ENCODE measurements at regions of chr19 and their contacts with region 1.

Region 1: GRCh38 chr19:37466798-37467607 is at the start of gene ZNF569:
- DNase-seq: peak; percentile 95
- ATAC-seq: peak; percentile 69
- H3K4me3 ChIP-seq: peak within 1 kb of the TSS; percentile 80 to 98 (median 86)
- H3K4me3 Mint-ChIP-seq: peak within 1 kb of the TSS; percentile 99
- H3K27ac ChIP-seq: peak within 1 kb of the TSS; percentile 77
- H3K27ac Mint-ChIP-seq: peak within 1 kb of the TSS; percentile 98
- H3K4me1 ChIP-seq: peaks cover 14 to 32% of the 10 kb centered on the region in 2 donors
- H3K4me1 Mint-ChIP-seq: peaks cover 32% of the 10 kb centered on the region
- H3K27me3 ChIP-seq: no peaks in the 10 kb centered on the region
- H3K27me3 Mint-ChIP-seq: no peaks in the 10 kb centered on the region
- CTCF ChIP-seq: no peak
- total RNA-seq, gene ZNF569: 11.1 and 13.9 TPM in 2 replicates

Region 2: DNA sequence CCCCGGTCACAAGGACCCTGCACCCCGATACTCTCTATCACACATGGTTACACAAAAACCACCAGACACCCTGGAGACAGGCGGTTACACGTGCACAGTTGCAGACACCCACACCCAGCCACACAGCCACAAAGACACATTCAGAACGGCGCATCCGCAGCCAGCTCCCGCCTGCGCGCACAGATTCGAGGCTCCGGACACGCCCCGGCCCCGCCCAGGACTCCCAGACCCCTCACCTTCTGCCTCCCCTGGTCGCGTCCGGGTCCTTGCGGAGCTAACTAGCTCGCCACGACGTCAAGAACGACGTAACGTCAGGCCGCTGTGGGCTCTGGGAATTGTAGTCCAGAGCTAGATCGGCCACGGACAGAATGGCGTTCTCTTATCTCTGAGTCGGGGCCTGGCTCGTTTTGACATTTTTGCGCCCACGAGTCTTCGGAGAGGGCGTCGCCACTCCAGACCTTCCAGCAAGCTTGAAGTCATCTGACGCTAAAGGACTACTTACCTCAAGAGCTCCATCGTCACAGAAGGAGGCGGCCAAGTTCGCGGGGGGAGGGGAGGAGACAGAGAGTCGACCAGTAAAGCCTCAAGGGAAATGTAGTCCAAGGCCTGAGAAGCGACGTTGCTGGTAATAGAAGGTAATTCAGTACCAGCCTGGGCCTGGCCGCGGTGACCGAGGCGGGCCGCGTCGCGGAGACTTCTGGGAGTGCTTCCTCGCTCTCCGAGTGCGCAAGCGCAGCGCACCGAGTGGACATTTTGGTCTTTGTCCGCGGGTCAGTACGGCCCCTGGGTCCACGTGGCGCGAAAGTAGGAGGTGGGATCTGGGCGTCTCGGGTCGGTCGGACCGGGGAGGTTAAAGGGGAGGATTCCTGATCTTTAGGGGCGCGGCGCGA is 1252.4 kb before region 1 on chr19 and contains the starts of genes ZNF146 and ZNF565:
- CTCF ChIA-PET with region 1: no interaction called
- POLR2A ChIA-PET with region 1: no interaction called
- intact Hi-C with region 1: loop called (anchors 2 kb)
- DNase-seq: peak; percentile 98
- ATAC-seq: peak; percentile 89
- H3K4me3 ChIP-seq: peak within 1 kb of the TSS; percentile 70 to 99 (median 85)
- H3K4me3 Mint-ChIP-seq: no peak within 1 kb of the TSS
- H3K27ac ChIP-seq: peak within 1 kb of the TSS; percentile 87 to 97
- H3K27ac Mint-ChIP-seq: peak within 1 kb of the TSS; percentile 41
- H3K4me1 ChIP-seq: peaks cover 13 to 21% of the 10 kb centered on the region in 2 donors
- H3K4me1 Mint-ChIP-seq: peaks cover 19% of the 10 kb centered on the region
- H3K27me3 ChIP-seq: no peaks in the 10 kb centered on the region
- H3K27me3 Mint-ChIP-seq: no peaks in the 10 kb centered on the region
- CTCF ChIP-seq: no peak
- total RNA-seq, gene ZNF146: 62.2 and 69.3 TPM in 2 replicates
- total RNA-seq, gene ZNF565: 5.2 and 5.5 TPM in 2 replicates

Region 3: GRCh38 chr19:36850559-36851442 is 616.2 kb before region 1 on chr19 and contains the start of gene ZNF345:
- CTCF ChIA-PET with region 1: interaction called, 3 read pairs
- POLR2A ChIA-PET with region 1: no interaction called
- intact Hi-C with region 1: loop called (anchors 1 kb)
- DNase-seq: peak; percentile 93
- ATAC-seq: peak; percentile 82
- H3K4me3 ChIP-seq: peak within 1 kb of the TSS; percentile 92 to 100 (median 93)
- H3K4me3 Mint-ChIP-seq: no peak within 1 kb of the TSS
- H3K27ac ChIP-seq: peak within 1 kb of the TSS; percentile 74 to 84
- H3K27ac Mint-ChIP-seq: no peak within 1 kb of the TSS
- H3K4me1 ChIP-seq: peaks cover 16 to 20% of the 10 kb centered on the region in 2 donors
- H3K4me1 Mint-ChIP-seq: peaks cover 5% of the 10 kb centered on the region
- H3K27me3 ChIP-seq: no peaks in the 10 kb centered on the region
- H3K27me3 Mint-ChIP-seq: no peaks in the 10 kb centered on the region
- CTCF ChIP-seq: no peak
- total RNA-seq, gene ZNF345: 17.7 and 19.5 TPM in 2 replicates

Region 4: DNA sequence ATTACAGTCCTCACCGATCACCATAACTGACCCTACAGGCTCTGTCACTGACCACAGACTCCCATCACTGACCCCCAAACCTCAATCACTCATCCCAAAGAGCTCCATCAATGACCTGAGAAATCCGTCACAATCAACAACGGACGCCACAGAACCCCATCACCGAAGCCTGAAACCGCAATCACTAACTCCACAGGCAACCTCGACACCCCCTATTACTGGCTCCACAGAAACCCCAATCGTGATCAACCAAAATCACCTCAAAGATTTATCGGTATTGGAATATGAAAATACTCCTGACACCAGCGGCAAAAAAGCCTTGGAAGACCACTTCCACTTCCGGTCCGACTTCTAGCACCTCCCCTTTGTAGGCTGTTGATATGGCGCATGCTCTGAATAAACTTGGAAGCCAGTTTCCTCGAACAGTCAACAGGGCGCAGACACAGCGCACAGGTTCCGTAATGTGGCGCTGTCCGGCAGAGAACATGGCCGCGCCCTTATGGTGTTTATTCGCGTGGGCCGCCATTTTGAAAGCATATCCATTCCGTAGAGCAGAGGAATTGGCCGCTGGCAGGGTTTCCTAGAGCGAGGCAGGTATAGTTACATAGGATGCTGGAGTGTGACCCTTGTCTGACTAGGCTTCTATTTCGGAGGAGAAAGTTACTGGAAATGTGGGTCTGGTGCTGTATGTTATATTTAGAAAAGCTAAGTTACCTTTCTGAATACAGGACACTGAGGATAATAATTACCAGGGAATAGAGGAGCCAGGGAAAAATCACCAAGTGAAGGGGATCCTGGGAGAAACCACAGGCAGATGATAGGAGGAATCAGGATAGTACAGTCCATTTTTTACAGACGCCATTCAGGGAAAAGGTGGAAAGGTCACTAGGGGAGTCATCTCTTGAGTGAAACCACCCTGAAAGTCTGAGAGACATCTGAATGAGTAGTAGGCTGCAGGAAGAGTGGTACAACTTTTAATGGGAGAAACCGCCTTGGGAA is 294.3 kb before region 1 on chr19 and contains the start of gene ZNF585A:
- CTCF ChIA-PET with region 1: no interaction called
- POLR2A ChIA-PET with region 1: no interaction called
- intact Hi-C with region 1: loop called (anchors 2 kb)
- DNase-seq: peak; percentile 96
- ATAC-seq: peak; percentile 100
- H3K4me3 ChIP-seq: peak within 1 kb of the TSS; percentile 72 to 96 (median 82)
- H3K4me3 Mint-ChIP-seq: no peak within 1 kb of the TSS
- H3K27ac ChIP-seq: peak within 1 kb of the TSS; percentile 70 to 89
- H3K27ac Mint-ChIP-seq: no peak within 1 kb of the TSS
- H3K4me1 ChIP-seq: peaks cover 5 to 7% of the 10 kb centered on the region in 2 donors
- H3K4me1 Mint-ChIP-seq: peaks cover 3% of the 10 kb centered on the region
- H3K27me3 ChIP-seq: no peaks in the 10 kb centered on the region
- H3K27me3 Mint-ChIP-seq: no peaks in the 10 kb centered on the region
- CTCF ChIP-seq: peak; percentile 23
- total RNA-seq, gene ZNF585A: 20.0 and 22.0 TPM in 2 replicates

Region 5: DNA sequence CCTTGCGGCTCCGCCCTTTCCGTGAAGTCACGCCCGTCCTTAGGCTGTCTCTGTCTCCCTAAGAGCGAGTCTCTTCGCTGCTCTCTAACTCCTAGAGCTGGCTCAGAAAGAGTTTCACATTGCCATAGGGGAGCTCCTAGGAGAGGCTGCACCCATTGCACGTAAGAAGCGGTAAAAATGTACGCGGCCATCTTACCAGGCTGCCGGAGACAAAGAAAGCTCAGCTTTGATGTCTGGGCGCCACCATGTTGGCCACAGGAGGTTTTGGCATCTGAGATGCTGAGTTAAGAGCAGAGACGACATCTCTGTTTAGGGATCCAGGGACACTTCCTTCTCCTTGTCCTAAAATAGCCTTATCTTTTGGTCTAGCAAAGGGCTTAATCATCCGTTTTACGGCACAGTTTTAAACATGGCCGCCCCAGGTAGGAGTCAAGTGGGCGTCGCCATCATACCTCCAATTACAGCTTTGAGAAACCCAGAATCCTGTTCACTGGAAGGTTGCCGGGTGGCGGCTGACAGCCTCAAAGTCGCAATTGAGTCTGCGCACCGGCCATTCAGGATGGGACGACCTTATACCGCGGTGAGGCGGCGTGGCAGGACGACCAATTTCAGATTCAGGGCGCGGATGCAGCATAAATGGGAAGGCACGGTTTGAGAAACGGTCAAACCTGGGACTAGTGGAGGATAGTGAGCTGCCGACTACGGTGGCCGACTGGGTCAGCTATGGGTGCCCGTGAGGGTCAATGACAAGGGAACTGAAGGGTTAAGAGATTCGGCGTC is 39.6 kb after region 1 on chr19 and contains the start of gene ZNF793:
- CTCF ChIA-PET with region 1: interaction called, 5 read pairs
- POLR2A ChIA-PET with region 1: interaction called, 23 read pairs
- intact Hi-C with region 1: loop called (anchors 1 kb)
- DNase-seq: peak; percentile 92
- ATAC-seq: peak; percentile 85
- H3K4me3 ChIP-seq: peak within 1 kb of the TSS; percentile 63 to 99 (median 83)
- H3K4me3 Mint-ChIP-seq: no peak within 1 kb of the TSS
- H3K27ac ChIP-seq: peak within 1 kb of the TSS; percentile 91 to 92
- H3K27ac Mint-ChIP-seq: no peak within 1 kb of the TSS
- H3K4me1 ChIP-seq: peaks cover 14 to 16% of the 10 kb centered on the region in 2 donors
- H3K4me1 Mint-ChIP-seq: peaks cover 2% of the 10 kb centered on the region
- H3K27me3 ChIP-seq: no peaks in the 10 kb centered on the region
- H3K27me3 Mint-ChIP-seq: no peaks in the 10 kb centered on the region
- CTCF ChIP-seq: no peak
- total RNA-seq, gene ZNF793: 12.2 and 12.7 TPM in 2 replicates

Region 6: GRCh38 chr19:37519890-37520289 is 52.9 kb after region 1 on chr19:
- CTCF ChIA-PET with region 1: no interaction called
- POLR2A ChIA-PET with region 1: no interaction called
- intact Hi-C with region 1: no loop called
- DNase-seq: no peak
- ATAC-seq: no peak
- H3K4me3 ChIP-seq: no peak overlapping the region
- H3K4me3 Mint-ChIP-seq: no peak overlapping the region
- H3K27ac ChIP-seq: no peak overlapping the region
- H3K27ac Mint-ChIP-seq: no peak overlapping the region
- H3K4me1 ChIP-seq: no peaks in the 10 kb centered on the region
- H3K4me1 Mint-ChIP-seq: no peaks in the 10 kb centered on the region
- H3K27me3 ChIP-seq: no peaks in the 10 kb centered on the region
- H3K27me3 Mint-ChIP-seq: no peaks in the 10 kb centered on the region
- CTCF ChIP-seq: no peak

Region 7: DNA sequence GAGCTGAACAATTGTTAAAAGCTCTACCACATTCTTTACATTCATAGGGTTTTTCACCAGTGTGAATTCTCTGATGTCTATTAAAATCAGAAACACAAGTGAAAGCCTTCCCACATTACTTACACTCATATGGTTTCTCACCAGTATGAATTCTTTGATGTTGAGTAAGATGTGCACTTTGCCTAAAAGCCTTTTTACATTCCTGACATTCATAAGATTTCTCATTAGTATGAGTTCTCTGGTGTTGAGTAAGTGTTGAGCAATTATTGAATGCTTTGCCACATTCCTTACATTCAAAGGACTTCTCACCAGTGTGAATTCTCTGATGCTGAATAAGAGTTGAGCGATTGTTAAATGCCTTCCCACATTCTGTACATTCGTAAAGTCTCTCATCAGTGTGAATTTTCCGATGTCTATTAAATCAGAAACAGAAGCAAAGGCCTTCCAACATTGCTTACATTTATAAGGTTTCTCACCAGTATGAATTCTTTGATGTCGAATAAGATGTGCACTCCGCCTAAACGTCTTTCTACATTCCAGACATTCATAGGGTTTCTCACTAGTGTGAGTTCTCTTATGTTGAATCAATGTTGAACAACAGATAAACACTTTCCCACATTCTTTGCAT is 202.4 kb after region 1 on chr19:
- CTCF ChIA-PET with region 1: no interaction called
- POLR2A ChIA-PET with region 1: no interaction called
- intact Hi-C with region 1: no loop called
- DNase-seq: no peak
- ATAC-seq: no peak
- H3K4me3 ChIP-seq: no peak overlapping the region
- H3K4me3 Mint-ChIP-seq: no peak overlapping the region
- H3K27ac ChIP-seq: no peak overlapping the region
- H3K27ac Mint-ChIP-seq: no peak overlapping the region
- H3K4me1 ChIP-seq: no peaks in the 10 kb centered on the region
- H3K4me1 Mint-ChIP-seq: no peaks in the 10 kb centered on the region
- H3K27me3 ChIP-seq: no peaks in the 10 kb centered on the region
- H3K27me3 Mint-ChIP-seq: no peaks in the 10 kb centered on the region
- CTCF ChIP-seq: no peak

Region 8: DNA sequence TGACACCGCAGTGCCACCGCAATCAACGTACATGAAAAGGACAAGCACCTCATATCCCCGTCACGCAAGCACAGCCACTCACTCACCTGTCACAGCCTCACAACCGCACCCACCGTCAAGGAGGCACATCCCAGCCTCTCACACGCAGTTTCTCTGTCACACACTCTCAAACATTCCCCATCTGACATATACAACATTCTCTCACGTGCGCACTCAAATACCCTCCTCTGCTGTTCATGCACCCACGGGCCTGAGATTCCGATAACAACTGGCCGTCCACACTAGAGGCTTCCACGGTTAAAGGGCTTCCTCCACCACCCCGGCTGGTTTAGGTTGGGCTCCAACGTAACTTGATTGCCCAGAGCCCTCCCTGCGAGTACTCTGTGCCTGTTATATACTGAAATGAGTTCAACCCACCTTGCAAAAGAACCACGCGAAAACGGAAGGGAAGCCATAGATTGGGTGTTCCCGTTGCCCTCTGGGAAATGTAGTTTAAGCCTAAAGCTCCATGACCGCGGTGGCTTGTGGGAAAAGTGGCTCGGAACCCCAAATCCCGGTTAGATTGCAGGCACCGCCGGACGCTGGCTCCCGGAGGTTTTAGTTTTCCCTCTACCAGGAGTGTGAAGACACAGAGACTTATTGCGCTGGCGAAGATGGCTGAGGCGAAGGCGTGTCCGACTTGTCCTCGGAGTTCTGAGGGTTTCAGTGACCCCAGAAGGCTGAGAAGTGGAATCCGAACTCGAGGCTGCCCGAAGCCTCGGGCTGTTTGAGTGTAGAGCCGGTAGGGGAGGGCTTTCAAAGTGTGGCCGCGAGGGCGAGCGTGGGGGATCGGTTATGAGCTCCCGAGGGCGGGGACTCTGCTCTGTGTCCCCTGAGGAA is 312.4 kb after region 1 on chr19 and contains the start of gene ZNF573:
- CTCF ChIA-PET with region 1: no interaction called
- POLR2A ChIA-PET with region 1: interaction called, 5 read pairs
- intact Hi-C with region 1: loop called (anchors 2 kb)
- DNase-seq: peak; percentile 91
- ATAC-seq: peak; percentile 84
- H3K4me3 ChIP-seq: peak within 1 kb of the TSS; percentile 71 to 81 (median 74)
- H3K4me3 Mint-ChIP-seq: peak within 1 kb of the TSS; percentile 96
- H3K27ac ChIP-seq: peak within 1 kb of the TSS; percentile 86 to 93
- H3K27ac Mint-ChIP-seq: peak within 1 kb of the TSS; percentile 97
- H3K4me1 ChIP-seq: peaks cover 7 to 11% of the 10 kb centered on the region in 2 donors
- H3K4me1 Mint-ChIP-seq: peaks cover 39% of the 10 kb centered on the region
- H3K27me3 ChIP-seq: no peaks in the 10 kb centered on the region
- H3K27me3 Mint-ChIP-seq: no peaks in the 10 kb centered on the region
- CTCF ChIP-seq: peak; percentile 18
- total RNA-seq, gene ZNF573: 28.8 and 31.1 TPM in 2 replicates